ENCODE measurements at regions of chr1 and their contacts with region 1.

Region 1: DNA sequence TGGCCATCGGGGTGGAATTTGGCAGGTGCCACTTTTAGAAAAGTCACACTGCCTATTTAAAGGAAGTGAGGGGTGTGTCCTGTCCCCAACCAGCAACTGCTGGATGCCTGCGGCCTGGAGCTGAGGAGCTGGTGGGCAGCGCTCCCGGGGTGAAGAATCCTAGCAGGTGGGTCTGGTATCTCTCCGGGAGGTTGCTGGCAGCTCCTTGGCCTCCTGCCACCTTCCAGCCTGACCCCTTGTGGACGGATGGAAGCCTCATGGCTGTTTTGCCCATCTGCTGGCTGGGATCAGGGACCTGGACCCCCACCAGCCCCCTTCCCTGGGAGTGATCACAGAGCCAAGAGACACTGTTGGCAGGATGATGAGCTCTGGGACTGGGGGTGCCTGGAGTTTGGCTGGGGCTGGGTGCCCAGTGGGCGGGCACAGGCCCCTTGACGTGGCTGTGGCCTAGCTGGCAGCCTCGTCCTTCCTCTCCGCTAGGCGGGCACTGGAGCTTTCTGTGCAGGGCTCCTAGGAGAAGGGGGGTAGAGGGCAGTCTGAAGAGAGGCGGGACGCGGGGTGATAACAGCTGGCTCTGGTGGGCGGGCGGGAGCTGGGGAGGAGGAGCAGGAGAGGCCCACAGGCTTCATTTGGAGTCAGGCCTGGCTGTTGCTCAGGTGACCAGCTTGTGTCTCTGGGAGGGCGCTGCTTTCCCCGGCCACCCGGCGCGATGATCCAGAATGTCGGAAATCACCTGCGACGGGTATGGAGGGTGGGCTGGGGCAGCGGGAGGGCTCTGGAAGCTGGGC is at the start of gene ACOT11:
- DNase-seq: peak; percentile 93
- total RNA-seq, gene ACOT11: 44.1 TPM

Region 2: DNA sequence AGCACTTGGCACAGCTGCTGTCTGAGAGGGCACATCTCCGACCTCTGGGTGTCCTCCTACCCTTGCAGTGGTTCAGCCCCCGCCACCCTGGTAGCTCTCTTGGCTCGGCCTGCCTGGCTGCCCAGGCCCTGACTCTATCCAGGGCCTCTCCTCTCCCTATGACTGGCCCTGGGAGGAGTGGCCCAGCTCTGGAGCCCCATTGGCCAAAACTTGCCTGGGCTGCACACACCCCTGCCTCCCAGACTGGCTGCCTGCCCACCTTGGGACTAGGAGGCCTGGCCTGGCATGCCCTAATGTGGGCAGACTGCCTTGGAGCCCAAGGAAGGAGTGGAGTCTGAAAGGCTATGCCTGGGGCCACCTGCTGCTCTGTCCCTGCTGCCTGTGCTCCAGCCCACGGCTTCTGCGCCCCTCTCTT is 33.8 kb after region 1 on chr1:
- intact Hi-C with region 1: loop called (anchors 1 kb)
- DNase-seq: peak; percentile 94

Region 3: GRCh38 chr1:54645806-54646676 is 98.2 kb after region 1 on chr1:
- intact Hi-C with region 1: loop called (anchors 2 kb)
- DNase-seq: no peak